ENCODE measurements at regions of chr6 and their contacts with region 1.

Region 1: GRCh38 chr6:157756708-157757429 is 66.2 kb upstream of the SNX9 start:
- DNase-seq: peak; percentile 83
- ATAC-seq: peak; percentile 49
- H3K4me3 ChIP-seq: peak overlapping the region; percentile 27; the same call in 1 of the 2 replicates
- H3K27ac ChIP-seq: no peak overlapping the region
- H3K4me1 ChIP-seq: peaks cover 33% of the 10 kb centered on the region
- H3K27me3 ChIP-seq: no peaks in the 10 kb centered on the region
- CTCF ChIP-seq: peak; percentile 79

Region 2: GRCh38 chr6:157873735-157874344 is 117.0 kb after region 1 on chr6:
- CTCF ChIA-PET with region 1: interaction called, 4 read pairs
- POLR2A ChIA-PET with region 1: no interaction called
- intact Hi-C with region 1: loop called (anchors 2 kb)
- DNase-seq: peak; percentile 72
- ATAC-seq: peak; percentile 90
- H3K4me3 ChIP-seq: no peak overlapping the region
- H3K27ac ChIP-seq: no peak overlapping the region
- H3K4me1 ChIP-seq: no peaks in the 10 kb centered on the region
- H3K27me3 ChIP-seq: no peaks in the 10 kb centered on the region
- CTCF ChIP-seq: peak; percentile 87

Region 3: GRCh38 chr6:157946865-157947532 is 190.1 kb after region 1 on chr6:
- CTCF ChIA-PET with region 1: no interaction called
- POLR2A ChIA-PET with region 1: no interaction called
- intact Hi-C with region 1: loop called (anchors 1 kb)
- DNase-seq: peak; percentile 36
- ATAC-seq: peak; percentile 65; the same call in 1 of the 2 replicates
- H3K4me3 ChIP-seq: no peak overlapping the region
- H3K27ac ChIP-seq: no peak overlapping the region
- H3K4me1 ChIP-seq: no peaks in the 10 kb centered on the region
- H3K27me3 ChIP-seq: no peaks in the 10 kb centered on the region
- CTCF ChIP-seq: peak; percentile 59